Ovary (tissue), 10 donors: ENCODE measurements at regions of chr4 and their contacts with region 1.

Region 1: DNA sequence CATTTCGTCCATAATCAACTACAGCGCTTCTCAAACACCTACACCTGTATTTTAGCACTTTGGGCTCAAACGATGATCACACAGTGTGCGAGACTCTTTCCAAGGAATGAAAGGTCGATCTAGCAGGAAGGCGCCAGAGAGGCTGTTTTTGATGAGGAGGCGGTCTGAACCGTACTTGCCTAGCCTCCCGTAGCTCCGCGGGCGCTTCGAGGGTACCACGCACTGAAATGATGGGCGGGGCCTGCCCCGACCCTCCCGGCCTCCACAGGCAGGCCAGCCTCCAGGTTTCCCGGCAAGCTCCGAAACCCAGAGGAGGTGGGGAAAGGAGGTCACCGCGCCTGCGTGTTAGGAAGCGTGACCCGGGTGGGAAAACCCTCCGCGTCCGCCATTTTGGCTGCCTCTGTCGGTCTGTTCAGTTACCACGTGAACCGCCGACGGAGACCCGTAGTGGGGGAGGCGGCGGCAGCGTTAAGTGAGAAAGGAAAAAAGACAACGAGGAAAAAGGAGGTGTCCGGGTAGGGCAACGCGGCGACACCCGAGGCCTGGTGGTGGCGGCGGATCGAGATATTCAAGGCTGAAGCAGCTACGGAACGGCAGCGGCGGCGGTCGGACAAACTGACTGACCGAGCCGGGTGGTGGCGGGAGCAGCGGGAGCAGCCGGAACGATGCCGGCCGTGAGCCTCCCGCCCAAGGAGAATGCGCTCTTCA is at the start of gene NAA15:
- DNase-seq: peak; percentile 97 to 98 (median 97)
- H3K4me3 ChIP-seq: peak within 1 kb of the TSS; percentile 74
- H3K27ac ChIP-seq: peak within 1 kb of the TSS; percentile 56 to 82
- H3K4me1 ChIP-seq: peaks cover 4% of the 10 kb centered on the region
- H3K27me3 ChIP-seq: no peaks in the 10 kb centered on the region
- CTCF ChIP-seq: no peak
- EP300 ChIP-seq: no peak
- POLR2A ChIP-seq: peak; percentile 80
- total RNA-seq, gene NAA15: 19.1 to 50.8 (median 35.7) TPM

Region 2: GRCh38 chr4:139083956-139084803 is 217.1 kb before region 1 on chr4:
- intact Hi-C with region 1: loop called in 1 of 4 experiments (anchors 10 kb)
- DNase-seq: peak; percentile 83 to 93 (median 88)
- H3K4me3 ChIP-seq: peak overlapping the region; percentile 76
- H3K27ac ChIP-seq: peak overlapping the region; percentile 88 to 92
- H3K4me1 ChIP-seq: no peaks in the 10 kb centered on the region
- H3K27me3 ChIP-seq: no peaks in the 10 kb centered on the region
- CTCF ChIP-seq: peak in 2 of 3 donors; percentile 28 to 51
- EP300 ChIP-seq: no peak
- POLR2A ChIP-seq: no peak

Region 3: DNA sequence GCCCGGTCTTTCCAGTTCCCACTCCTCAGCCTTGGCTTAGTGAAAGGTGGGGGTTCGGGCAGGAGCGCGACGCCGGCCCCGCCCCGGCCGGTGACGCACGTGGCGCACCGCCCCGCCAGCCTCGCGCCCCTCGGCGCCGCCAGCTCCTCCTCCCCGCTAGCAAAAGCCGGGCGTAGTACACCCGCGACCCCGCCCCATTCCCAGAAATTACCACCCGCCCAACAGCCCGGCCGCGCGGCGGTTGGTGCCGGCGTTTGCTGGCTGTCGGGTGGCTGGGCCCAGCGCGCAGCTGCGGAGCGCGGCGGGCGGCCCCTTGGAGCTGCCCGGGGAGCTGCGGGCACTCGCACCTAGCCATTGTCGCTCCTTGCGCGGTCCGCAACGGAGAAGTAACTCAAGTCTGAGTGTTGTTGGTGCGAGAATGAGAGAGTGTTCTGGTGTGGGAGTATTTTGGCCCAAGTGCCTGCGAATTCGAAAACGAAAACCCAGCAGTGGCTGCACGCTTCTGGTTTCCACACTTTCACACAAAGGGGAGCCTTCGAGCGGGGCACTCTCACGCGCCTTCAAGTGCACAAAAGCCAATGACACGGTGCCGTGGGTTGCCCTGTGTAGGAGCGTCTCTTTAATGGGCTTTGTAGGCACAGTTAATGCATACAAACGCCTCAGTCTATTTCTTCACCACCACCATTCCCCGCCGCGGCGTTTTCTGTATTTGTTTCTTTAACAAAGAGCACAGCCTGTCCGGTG is 123.2 kb before region 1 on chr4:
- intact Hi-C with region 1: loop called in 2 of 4 experiments (anchors 5 to 10 kb)
- DNase-seq: peak; percentile 91 to 95 (median 94)
- H3K4me3 ChIP-seq: peak overlapping the region; percentile 82
- H3K27ac ChIP-seq: peak overlapping the region; percentile 99 to 100
- H3K4me1 ChIP-seq: no peaks in the 10 kb centered on the region
- H3K27me3 ChIP-seq: no peaks in the 10 kb centered on the region
- CTCF ChIP-seq: no peak
- EP300 ChIP-seq: peak; percentile 84
- POLR2A ChIP-seq: peak; percentile 75

Region 4: DNA sequence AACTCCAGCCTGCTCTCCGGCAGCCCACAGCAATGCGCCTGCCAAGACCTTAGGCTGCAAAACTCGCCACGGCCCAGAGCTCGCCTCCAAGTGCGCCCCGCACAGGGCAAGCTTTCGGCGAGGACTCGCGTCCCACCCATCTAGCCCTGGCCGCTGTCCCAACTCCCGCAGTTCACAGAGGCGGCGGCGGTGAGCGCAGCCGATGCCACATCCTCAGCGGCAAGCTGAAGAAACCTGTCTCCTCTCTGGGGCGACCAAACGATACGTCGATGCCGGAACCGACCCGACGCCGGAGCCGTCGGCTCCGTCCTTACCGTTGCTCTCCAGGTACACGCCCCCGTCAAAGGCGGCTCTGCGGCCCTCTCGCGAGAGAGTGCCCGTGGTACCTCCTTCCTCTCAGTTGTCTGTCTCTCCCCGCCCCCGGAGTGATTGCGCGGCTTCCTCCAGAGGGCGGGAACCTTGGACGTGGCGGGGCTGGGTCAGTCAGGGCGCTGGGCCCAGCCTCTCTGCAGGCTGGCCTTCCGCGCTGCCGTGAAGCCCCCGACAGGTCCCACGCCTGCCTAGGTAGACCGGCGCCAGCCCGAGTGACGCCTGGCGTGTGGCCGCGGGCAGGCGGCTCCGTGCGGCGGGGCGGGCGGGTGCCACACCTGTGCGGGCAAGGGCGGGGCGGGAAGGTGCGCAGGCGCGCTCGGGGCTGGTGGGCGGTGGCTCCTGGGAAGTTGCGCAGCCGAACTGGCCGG is 152.3 kb after region 1 on chr4:
- intact Hi-C with region 1: loop called in 1 of 4 experiments (anchors 10 kb)
- DNase-seq: peak; percentile 97 to 99 (median 98)
- H3K4me3 ChIP-seq: peak overlapping the region; percentile 94
- H3K27ac ChIP-seq: peak overlapping the region; percentile 94 to 95
- H3K4me1 ChIP-seq: peaks cover 7% of the 10 kb centered on the region
- H3K27me3 ChIP-seq: no peaks in the 10 kb centered on the region
- CTCF ChIP-seq: no peak
- EP300 ChIP-seq: no peak
- POLR2A ChIP-seq: peak; percentile 75